Left ventricle myocardium inferior (tissue), 1 donor: ENCODE measurements at regions of chr17 and their contacts with region 1.

Region 1: DNA sequence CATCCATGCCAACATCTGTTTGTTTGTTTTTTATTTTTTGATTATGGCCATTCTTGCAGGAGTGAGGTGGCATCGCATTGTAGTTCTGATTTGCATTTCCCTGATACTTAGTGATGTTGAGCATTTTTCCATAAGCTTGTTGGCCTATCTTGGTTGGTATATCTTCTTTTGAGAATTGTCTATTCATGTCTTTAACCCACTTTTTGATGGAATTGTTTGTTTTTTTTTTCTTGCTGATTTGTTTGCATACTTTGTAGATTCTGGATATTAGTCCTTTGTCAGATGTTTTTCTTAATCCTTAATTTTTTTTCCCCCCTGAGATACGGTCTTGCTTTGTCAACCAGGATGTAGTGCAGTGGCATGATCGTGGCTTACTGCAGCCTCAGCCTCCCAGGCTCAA is 43.0 kb downstream of the RNF135 start:
- DNase-seq: no peak
- H3K4me3 ChIP-seq: no peak overlapping the region
- H3K27ac ChIP-seq: no peak overlapping the region
- H3K4me1 ChIP-seq: peaks cover 13% of the 10 kb centered on the region
- H3K27me3 ChIP-seq: no peaks in the 10 kb centered on the region
- CTCF ChIP-seq: no peak

Region 2: GRCh38 chr17:30824356-30825145 is 189.3 kb before region 1 on chr17 and contains the start of gene CRLF3:
- intact Hi-C with region 1: no loop called
- DNase-seq: peak; percentile 91
- H3K4me3 ChIP-seq: peak within 1 kb of the TSS; percentile 87
- H3K27ac ChIP-seq: peak within 1 kb of the TSS; percentile 88
- H3K4me1 ChIP-seq: peaks cover 42% of the 10 kb centered on the region
- H3K27me3 ChIP-seq: no peaks in the 10 kb centered on the region
- CTCF ChIP-seq: peak; percentile 73
- total RNA-seq, gene CRLF3: 4.7 TPM

Region 3: DNA sequence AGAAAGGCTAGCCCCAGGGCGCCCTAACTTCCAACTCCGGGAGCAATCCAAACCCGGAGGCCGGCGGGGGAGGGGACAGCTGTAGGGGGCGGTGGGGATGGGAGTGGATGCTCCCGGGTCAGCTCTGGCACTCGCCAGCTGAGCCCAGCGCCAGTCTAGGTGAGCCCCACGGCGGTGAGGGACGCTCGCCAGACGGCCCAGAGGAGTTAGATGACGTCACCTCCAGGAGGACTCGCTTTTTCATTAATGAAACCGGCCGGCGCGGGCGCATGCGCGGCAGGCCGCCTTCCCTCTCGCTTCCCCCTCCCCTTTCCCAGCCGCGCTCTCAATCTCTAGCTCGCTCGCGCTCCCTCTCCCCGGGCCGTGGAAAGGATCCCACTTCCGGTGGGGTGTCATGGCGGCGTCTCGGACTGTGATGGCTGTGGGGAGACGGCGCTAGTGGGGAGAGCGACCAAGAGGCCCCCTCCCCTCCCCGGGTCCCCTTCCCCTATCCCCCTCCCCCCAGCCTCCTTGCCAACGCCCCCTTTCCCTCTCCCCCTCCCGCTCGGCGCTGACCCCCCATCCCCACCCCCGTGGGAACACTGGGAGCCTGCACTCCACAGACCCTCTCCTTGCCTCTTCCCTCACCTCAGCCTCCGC is 80.9 kb after region 1 on chr17 and contains the start of gene NF1:
- intact Hi-C with region 1: no loop called
- DNase-seq: peak; percentile 96
- H3K4me3 ChIP-seq: peak within 1 kb of the TSS; percentile 94
- H3K27ac ChIP-seq: peak within 1 kb of the TSS; percentile 94
- H3K4me1 ChIP-seq: peaks cover 32% of the 10 kb centered on the region
- H3K27me3 ChIP-seq: no peaks in the 10 kb centered on the region
- CTCF ChIP-seq: no peak
- total RNA-seq, gene NF1: 42.5 TPM

Region 4: DNA sequence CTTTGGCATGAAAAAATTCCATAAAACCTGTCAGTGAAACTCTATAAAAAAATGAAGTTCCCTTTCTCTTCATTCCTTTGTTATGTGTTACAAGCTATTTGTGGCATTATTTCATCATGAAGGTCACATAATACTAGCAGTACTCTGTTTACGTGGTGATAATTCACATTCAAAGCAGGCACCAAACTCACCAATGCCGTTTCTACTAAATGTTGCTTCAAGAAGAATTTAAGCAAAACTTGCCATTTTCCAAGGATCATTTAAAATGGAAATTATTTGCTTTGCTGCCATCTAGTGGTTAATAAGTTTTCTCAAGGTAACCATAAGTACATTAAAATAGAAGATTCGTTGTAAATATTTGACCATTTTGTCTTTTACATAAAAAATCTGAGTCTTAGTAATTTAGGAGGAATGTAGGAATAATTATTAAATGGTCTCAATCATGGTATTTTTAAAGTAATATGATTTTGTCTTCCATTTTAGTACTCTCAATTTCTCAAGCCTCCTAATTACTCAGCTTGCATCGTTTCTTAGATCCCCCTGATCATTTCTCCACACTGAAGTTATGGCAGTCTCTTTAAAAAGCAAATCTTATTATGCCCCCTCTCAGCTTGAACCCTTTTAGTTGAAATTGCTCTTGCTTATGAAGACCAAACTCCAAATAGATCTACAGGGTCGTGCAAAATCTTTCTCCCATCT is 202.4 kb after region 1 on chr17:
- intact Hi-C with region 1: loop called (anchors 2 kb)
- DNase-seq: no peak
- H3K4me3 ChIP-seq: no peak overlapping the region
- H3K27ac ChIP-seq: peak overlapping the region; percentile 4
- H3K4me1 ChIP-seq: peaks cover 11% of the 10 kb centered on the region
- H3K27me3 ChIP-seq: no peaks in the 10 kb centered on the region
- CTCF ChIP-seq: peak; percentile 70